Mammary epithelial cell (primary cell): ENCODE measurements at regions of chr3 and their contacts with region 1.

Region 1: GRCh38 chr3:146972726-146973125 is 367.6 kb upstream of the PLSCR5 start:
- DNase-seq: peak; percentile 21
- H3K4me3 ChIP-seq: no peak overlapping the region
- H3K27ac ChIP-seq: no peak overlapping the region
- H3K4me1 ChIP-seq: peaks cover 7% of the 10 kb centered on the region
- H3K27me3 ChIP-seq: no peaks in the 10 kb centered on the region
- CTCF ChIP-seq: no peak

Region 2: DNA sequence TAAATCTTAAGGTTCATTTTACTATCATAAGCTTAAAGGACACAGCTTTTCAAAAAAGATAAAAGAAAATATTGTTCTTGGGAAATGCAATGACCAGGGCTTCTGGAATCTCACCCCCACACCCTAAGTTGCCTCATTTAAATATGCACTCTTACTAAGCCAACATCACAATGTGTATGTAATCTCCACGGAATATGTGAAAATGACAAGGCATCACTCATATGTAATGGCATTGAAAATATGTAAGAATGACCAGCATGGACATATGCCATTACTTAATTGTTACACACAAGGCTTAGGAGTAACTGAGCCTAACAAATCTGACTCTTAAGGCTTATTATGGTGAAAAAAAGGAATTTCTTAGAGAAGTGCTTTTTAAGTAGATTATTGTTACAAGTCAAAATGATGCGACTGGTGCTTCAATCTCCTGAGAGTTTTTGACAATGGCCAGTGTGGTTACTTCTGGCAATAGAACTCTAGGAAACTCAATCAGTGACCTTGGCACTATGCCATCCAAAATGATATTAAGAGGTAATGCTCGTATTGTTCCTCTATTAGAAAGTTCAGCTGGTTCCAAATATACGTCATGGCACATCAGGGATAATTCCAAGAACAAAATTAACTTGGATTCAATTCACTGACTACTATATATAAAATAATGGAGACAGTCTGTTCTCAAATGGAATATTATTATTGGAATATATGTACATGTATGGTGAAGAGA is 77.5 kb before region 1 on chr3:
- CTCF ChIA-PET with region 1: no interaction called
- dilution Hi-C with region 1: loop called (anchors 5 kb)
- in situ Hi-C with region 1: no loop called
- intact Hi-C with region 1: no loop called
- DNase-seq: peak; percentile 17
- H3K4me3 ChIP-seq: no peak overlapping the region
- H3K27ac ChIP-seq: no peak overlapping the region
- H3K4me1 ChIP-seq: no peaks in the 10 kb centered on the region
- H3K27me3 ChIP-seq: no peaks in the 10 kb centered on the region
- CTCF ChIP-seq: no peak